ENCODE measurements at regions of chr7 and their contacts with region 1.

Region 1: DNA sequence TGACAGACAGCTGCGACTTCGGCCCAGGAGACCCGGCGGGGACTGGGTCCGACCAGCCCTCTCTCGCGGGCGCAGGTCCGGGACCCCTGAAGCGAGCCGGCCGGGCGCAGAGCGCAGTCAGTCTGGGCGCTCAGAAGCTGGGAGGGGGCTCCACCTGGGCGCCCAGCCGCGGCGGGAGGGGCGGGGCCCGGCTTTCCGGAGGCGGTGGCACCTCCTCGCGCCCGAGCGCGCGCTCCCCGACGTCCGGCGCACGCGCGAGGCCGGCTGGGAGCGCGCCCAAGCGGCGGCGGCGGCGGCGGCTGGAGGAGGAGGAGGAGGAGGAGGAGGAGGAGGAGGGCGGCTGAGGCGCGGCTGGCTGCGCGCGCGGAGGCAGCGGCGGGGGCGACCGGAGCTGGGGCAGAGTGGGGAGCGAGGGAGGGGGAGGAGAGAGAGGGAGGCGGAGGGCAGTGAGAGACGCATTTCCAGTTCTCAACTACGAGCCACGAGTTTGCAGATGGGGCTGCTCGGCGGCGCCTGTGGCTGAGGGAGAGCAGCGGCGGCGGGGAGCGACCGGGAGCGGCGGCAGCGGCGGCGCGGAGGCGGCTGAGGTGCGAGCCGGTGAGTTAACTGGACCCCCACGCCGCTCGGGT is at the start of gene PALS2:
- DNase-seq: peak; percentile 82
- H3K4me3 Mint-ChIP-seq: peak within 1 kb of the TSS; percentile 83
- H3K27ac Mint-ChIP-seq: peak within 1 kb of the TSS; percentile 70
- H3K4me1 Mint-ChIP-seq: peaks cover 28% of the 10 kb centered on the region
- H3K27me3 Mint-ChIP-seq: peaks cover 3% of the 10 kb centered on the region
- total RNA-seq, gene PALS2: 21.0 to 22.9 TPM

Region 2: DNA sequence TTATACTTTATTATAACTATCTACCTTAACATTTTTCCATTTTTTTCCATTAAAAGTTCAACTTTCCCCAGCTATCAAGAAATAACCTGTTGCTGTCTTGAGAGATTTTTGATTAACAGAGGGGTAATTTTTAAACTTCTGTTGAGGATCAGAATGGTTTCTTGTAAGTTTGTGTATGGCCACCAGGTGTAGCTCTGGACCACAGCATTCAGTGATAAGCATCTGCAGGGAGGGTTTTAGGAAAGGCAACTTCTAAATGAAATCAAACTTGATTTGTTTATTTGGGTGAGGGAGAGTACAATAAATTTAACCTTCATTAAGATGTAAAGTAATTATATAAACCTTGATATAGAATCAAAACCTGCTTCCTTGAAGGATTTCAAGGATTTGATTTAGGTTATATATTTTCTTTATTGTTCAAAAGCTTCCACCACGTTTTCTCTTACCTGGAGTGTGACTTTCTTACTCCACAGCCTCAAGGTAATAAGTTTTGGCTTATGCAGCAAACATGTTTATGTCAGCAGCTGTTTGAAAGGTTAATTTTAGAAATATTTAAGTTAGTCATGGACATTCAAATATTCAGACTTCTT is 709.8 kb before region 1 on chr7:
- CTCF ChIA-PET with region 1: no interaction called
- POLR2A ChIA-PET with region 1: no interaction called
- intact Hi-C with region 1: loop called (anchors 10 kb)
- DNase-seq: peak; percentile 22
- H3K4me3 Mint-ChIP-seq: no peak overlapping the region
- H3K27ac Mint-ChIP-seq: no peak overlapping the region
- H3K4me1 Mint-ChIP-seq: no peaks in the 10 kb centered on the region
- H3K27me3 Mint-ChIP-seq: peaks cover 8% of the 10 kb centered on the region

Region 3: GRCh38 chr7:24401628-24402593 is 171.2 kb before region 1 on chr7:
- CTCF ChIA-PET with region 1: no interaction called
- POLR2A ChIA-PET with region 1: no interaction called
- intact Hi-C with region 1: loop called (anchors 5 kb)
- DNase-seq: no peak
- H3K4me3 Mint-ChIP-seq: no peak overlapping the region
- H3K27ac Mint-ChIP-seq: no peak overlapping the region
- H3K4me1 Mint-ChIP-seq: peaks cover 8% of the 10 kb centered on the region
- H3K27me3 Mint-ChIP-seq: no peaks in the 10 kb centered on the region

Region 4: DNA sequence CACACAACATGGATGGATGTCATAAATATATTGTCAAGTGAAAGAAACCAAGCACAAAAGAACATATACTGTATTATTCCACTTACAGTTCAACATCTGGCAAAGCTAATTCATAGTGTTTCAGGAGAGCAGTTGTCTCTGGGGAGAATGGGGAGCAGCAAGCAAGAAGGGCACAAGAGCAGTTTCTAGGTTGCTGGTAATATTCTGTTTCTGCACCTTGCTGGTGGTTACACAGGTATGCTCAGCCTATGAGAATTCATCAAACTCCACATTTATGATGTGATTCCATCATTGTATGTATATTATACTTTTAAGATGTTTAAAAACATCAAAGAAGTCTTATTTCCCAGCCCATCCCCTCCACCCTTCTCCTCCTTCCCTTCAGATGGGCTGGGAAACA is 17.9 kb before region 1 on chr7:
- CTCF ChIA-PET with region 1: no interaction called
- POLR2A ChIA-PET with region 1: no interaction called
- intact Hi-C with region 1: no loop called
- DNase-seq: no peak
- H3K4me3 Mint-ChIP-seq: no peak overlapping the region
- H3K27ac Mint-ChIP-seq: no peak overlapping the region
- H3K4me1 Mint-ChIP-seq: peaks cover 1% of the 10 kb centered on the region
- H3K27me3 Mint-ChIP-seq: no peaks in the 10 kb centered on the region

Region 5: DNA sequence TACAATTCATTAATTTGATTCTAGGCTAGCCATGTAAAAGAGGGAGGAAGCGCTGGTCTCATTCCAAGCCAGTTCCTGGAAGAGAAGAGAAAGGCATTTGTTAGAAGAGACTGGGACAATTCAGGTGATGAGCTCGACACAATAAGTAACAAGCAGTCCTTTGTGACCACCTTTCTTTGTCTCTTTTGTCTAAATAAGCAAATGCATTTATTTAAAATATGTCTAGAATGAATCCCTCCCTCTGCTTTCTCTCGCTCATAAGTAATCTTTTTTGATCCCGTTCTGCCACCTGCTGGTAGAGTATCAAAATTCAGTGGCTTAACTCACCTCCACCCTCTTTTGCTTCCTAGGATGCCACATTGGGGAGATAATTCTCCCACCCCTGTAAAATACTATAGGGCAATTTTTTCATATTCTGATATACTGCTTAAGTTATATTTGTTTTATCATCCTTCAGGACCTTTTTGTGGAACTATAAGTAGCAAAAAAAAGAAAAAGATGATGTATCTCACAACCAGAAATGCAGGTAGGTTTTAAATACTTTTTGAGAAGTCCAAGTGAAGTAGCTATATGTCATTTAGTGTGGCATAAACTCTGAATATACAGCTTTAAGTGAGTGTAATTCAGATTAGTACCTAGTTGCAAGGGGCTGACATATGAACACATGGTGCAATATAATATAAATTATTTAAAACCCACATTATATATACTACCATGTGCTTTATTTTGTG is 92.6 kb after region 1 on chr7:
- CTCF ChIA-PET with region 1: interaction called, 69 read pairs
- POLR2A ChIA-PET with region 1: no interaction called
- intact Hi-C with region 1: loop called (anchors 1 kb)
- DNase-seq: peak; percentile 32
- H3K4me3 Mint-ChIP-seq: no peak overlapping the region
- H3K27ac Mint-ChIP-seq: no peak overlapping the region
- H3K4me1 Mint-ChIP-seq: no peaks in the 10 kb centered on the region
- H3K27me3 Mint-ChIP-seq: no peaks in the 10 kb centered on the region

Region 6: DNA sequence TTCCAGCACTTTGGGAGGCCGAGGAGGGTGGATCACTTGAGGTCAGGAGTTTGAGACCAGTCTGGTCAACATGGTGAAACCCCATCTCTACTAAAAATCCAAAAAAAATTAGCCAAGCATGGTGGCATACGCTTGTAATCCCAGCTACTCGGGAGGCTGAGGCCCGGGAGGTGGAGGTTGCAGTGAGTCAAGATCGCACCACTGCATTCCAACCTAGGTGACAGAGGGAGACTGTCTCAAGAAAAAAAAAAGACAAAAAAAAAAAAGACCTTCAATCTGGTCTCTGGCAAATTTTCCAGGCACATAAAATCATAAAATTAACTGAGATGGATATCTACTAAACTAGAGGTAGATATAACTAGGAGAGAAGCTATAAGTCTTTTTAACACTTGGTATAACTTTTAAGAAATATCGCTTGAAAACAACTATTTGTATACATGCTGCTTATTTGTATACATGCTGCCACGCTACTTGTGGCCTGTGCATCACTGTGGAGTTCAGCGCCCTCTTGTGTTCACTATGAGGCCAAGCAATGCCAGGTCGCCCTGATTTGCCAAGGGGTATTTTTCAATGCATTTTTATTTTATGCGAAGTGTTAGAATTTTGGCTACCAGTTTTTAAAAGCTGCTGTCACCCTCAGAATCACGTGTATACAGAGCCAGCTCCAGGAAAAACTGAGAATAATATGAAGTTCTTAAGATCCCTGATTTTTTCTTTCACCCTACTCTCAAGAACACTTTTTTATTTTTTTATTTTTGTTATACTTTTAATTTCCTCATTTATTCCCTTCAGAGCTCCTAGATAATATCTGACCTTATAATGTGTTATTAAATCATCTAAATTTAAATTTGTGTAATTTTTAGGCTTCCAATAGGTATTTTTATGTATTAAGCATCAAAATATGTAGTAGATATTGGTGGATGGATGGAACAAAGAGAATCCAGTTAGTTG is 525.3 kb after region 1 on chr7:
- CTCF ChIA-PET with region 1: interaction called, 7 read pairs
- POLR2A ChIA-PET with region 1: no interaction called
- intact Hi-C with region 1: loop called (anchors 1 kb)
- DNase-seq: peak; percentile 69
- H3K4me3 Mint-ChIP-seq: no peak overlapping the region
- H3K27ac Mint-ChIP-seq: no peak overlapping the region
- H3K4me1 Mint-ChIP-seq: peaks cover 11% of the 10 kb centered on the region
- H3K27me3 Mint-ChIP-seq: peaks cover 2% of the 10 kb centered on the region